PC-9 (cell line): ENCODE measurements at regions of chr5 and their contacts with region 1.

Region 1: DNA sequence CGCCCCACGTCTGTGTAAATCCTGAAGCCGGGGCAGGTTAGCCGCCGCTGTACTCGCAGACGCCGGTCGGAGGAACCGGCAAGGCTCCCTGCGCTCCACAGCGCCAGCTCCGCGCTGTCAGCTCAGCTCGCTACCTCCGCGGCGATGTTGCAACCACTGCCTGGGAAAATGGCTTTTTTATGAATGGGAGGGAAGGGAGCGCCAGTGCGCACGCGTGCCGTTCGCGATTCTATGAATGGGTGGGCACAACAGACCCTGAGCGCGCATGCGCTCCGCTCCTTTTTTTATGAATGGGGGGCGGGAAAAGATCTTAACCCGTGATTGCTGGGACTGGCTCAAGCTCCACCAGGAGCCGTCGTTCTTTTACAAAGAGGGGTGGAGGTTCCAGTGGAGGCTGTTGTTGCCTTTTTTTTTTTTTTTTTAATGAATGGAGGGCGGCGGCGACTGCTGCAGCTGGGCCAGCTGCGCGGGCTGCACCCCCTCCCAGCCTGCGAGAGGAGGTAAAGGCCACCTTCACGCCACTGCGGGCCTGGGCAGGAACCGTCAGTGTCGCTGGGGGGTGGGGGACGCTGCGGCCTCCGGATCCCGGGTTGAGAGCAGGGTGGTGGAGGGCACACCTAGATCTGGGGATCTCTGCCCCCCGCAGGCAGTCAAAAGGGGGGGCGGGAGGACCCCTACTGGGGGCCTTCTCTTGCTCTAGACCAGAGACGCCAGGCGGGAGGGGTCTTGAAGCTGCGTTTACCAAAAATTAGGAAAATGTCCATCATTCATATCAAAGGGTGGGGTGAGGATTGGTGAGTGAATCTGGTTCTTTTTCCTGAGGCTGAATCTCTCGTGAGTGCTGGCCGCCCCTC is at the start of gene SPRY4:
- DNase-seq: peak; percentile 93 to 96
- H3K4me3 ChIP-seq: peak within 1 kb of the TSS; percentile 82
- H3K27ac ChIP-seq: peak within 1 kb of the TSS; percentile 85
- H3K4me1 ChIP-seq: peaks cover 45% of the 10 kb centered on the region
- H3K27me3 ChIP-seq: no peaks in the 10 kb centered on the region
- CTCF ChIP-seq: no peak
- total RNA-seq, gene SPRY4: 6.9 and 11.0 TPM in 2 replicates

Region 2: DNA sequence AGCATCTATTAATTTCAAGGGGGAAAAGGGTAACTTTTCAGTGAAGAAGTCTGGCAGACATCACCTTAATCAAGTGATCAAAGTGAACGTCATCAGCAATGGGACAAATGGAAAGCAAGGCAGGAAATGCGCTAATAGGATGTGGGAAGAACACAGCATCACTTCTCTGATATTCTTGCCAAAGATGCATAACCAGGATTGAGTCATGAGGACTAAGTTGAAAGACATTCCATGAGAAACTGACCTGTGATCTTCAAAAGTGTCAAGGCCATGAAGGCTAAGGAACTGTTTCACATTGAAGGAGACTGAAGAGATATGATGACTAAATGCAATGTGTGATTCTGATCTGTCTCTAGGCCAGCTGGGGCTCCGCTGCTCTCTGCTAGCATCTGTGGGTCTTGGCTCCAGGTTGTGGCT is 123.6 kb before region 1 on chr5:
- CTCF ChIA-PET with region 1: no interaction called
- POLR2A ChIA-PET with region 1: interaction called, 35 read pairs
- intact Hi-C with region 1: no loop called
- DNase-seq: no peak
- H3K4me3 ChIP-seq: no peak overlapping the region
- H3K27ac ChIP-seq: no peak overlapping the region
- H3K4me1 ChIP-seq: no peaks in the 10 kb centered on the region
- H3K27me3 ChIP-seq: no peaks in the 10 kb centered on the region
- CTCF ChIP-seq: no peak

Region 3: GRCh38 chr5:142235055-142235797 is 89.9 kb before region 1 on chr5:
- CTCF ChIA-PET with region 1: no interaction called
- POLR2A ChIA-PET with region 1: no interaction called
- intact Hi-C with region 1: loop called (anchors 1 kb)
- DNase-seq: peak; percentile 57 to 82
- H3K4me3 ChIP-seq: peak overlapping the region; percentile 17; the same call in 1 of the 2 replicates
- H3K27ac ChIP-seq: no peak overlapping the region; the same call in 1 of the 2 replicates
- H3K4me1 ChIP-seq: peaks cover 45% of the 10 kb centered on the region
- H3K27me3 ChIP-seq: no peaks in the 10 kb centered on the region
- CTCF ChIP-seq: no peak

Region 4: DNA sequence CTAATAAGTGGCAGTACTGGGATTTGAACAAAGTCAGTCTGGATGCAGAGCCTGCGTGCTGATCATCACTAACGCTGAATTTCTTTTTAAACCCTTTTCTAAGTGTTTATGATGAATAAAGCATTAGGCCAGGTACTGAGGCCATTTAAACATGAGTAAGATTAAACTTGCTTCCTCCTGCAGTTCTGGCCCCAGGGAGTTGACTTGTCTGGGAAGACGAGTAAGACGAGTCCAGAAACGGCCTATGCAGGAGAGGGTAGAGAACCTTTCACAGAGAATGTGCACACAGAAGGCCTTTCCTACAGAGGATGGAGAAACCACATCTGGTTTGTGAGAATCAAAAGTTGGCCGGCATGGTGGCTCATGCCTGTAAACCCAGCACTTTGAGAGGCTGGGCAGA is 43.1 kb before region 1 on chr5:
- CTCF ChIA-PET with region 1: no interaction called
- POLR2A ChIA-PET with region 1: interaction called, 18 read pairs
- intact Hi-C with region 1: no loop called
- DNase-seq: no peak
- H3K4me3 ChIP-seq: no peak overlapping the region
- H3K27ac ChIP-seq: no peak overlapping the region
- H3K4me1 ChIP-seq: peaks cover 37% of the 10 kb centered on the region
- H3K27me3 ChIP-seq: no peaks in the 10 kb centered on the region
- CTCF ChIP-seq: no peak

Region 5: GRCh38 chr5:142404046-142404477 is 79.0 kb after region 1 on chr5:
- CTCF ChIA-PET with region 1: interaction called, 3 read pairs
- POLR2A ChIA-PET with region 1: no interaction called
- intact Hi-C with region 1: loop called (anchors 5 kb)
- DNase-seq: no peak
- H3K4me3 ChIP-seq: peak overlapping the region; percentile 55
- H3K27ac ChIP-seq: peak overlapping the region; percentile 87
- H3K4me1 ChIP-seq: peaks cover 57% of the 10 kb centered on the region
- H3K27me3 ChIP-seq: no peaks in the 10 kb centered on the region
- CTCF ChIP-seq: no peak

Region 6: GRCh38 chr5:142529626-142530278 is 204.7 kb after region 1 on chr5:
- CTCF ChIA-PET with region 1: no interaction called
- POLR2A ChIA-PET with region 1: interaction called, 3 read pairs
- intact Hi-C with region 1: loop called (anchors 5 kb)
- DNase-seq: peak; percentile 46 to 95
- H3K4me3 ChIP-seq: no peak overlapping the region
- H3K27ac ChIP-seq: peak overlapping the region; percentile 83
- H3K4me1 ChIP-seq: peaks cover 44% of the 10 kb centered on the region
- H3K27me3 ChIP-seq: no peaks in the 10 kb centered on the region
- CTCF ChIP-seq: no peak

Region 7: GRCh38 chr5:142699184-142699720 is 374.2 kb after region 1 on chr5:
- CTCF ChIA-PET with region 1: interaction called, 4 read pairs
- POLR2A ChIA-PET with region 1: no interaction called
- intact Hi-C with region 1: loop called (anchors 10 kb)
- DNase-seq: peak; percentile 73 to 80
- H3K4me3 ChIP-seq: no peak overlapping the region
- H3K27ac ChIP-seq: no peak overlapping the region
- H3K4me1 ChIP-seq: peaks cover 12% of the 10 kb centered on the region
- H3K27me3 ChIP-seq: no peaks in the 10 kb centered on the region
- CTCF ChIP-seq: peak; percentile 98